ENCODE measurements at regions of chr1 and their contacts with region 1.

Region 1: GRCh38 chr1:92858564-92859399 is 26.9 kb downstream of the RPL5 start:
- DNase-seq: peak; percentile 9 to 88 (median 47)
- ATAC-seq: peak; percentile 97
- H3K4me3 ChIP-seq: peak overlapping the region in 1 of 2 experiments; percentile 4
- H3K4me3 Mint-ChIP-seq: peak overlapping the region; percentile 68
- H3K27ac ChIP-seq: no peak overlapping the region
- H3K27ac Mint-ChIP-seq: peak overlapping the region; percentile 73
- H3K4me1 ChIP-seq: peaks cover 8% of the 10 kb centered on the region
- H3K4me1 Mint-ChIP-seq: peaks cover 17% of the 10 kb centered on the region
- H3K27me3 ChIP-seq: no peaks in the 10 kb centered on the region
- H3K27me3 Mint-ChIP-seq: no peaks in the 10 kb centered on the region
- CTCF ChIP-seq: peak; percentile 98

Region 2: GRCh38 chr1:92709738-92710137 is 149.0 kb before region 1 on chr1:
- CTCF ChIA-PET with region 1: no interaction called
- POLR2A ChIA-PET with region 1: no interaction called
- intact Hi-C with region 1: no loop called
- DNase-seq: no peak
- ATAC-seq: no peak
- H3K4me3 ChIP-seq: no peak overlapping the region
- H3K4me3 Mint-ChIP-seq: no peak overlapping the region
- H3K27ac ChIP-seq: no peak overlapping the region
- H3K27ac Mint-ChIP-seq: no peak overlapping the region
- H3K4me1 ChIP-seq: no peaks in the 10 kb centered on the region
- H3K4me1 Mint-ChIP-seq: no peaks in the 10 kb centered on the region
- H3K27me3 ChIP-seq: no peaks in the 10 kb centered on the region
- H3K27me3 Mint-ChIP-seq: peaks cover 2% of the 10 kb centered on the region
- CTCF ChIP-seq: no peak

Region 3: GRCh38 chr1:92882819-92883218 is 24.0 kb after region 1 on chr1:
- CTCF ChIA-PET with region 1: interaction called, 34 read pairs
- POLR2A ChIA-PET with region 1: interaction called, 4 read pairs
- intact Hi-C with region 1: no loop called
- DNase-seq: peak in 8 of 9 experiments; percentile 30 to 81 (median 56)
- ATAC-seq: peak; percentile 94
- H3K4me3 ChIP-seq: no peak overlapping the region
- H3K4me3 Mint-ChIP-seq: peak overlapping the region; percentile 42
- H3K27ac ChIP-seq: peak overlapping the region; percentile 3 to 80
- H3K27ac Mint-ChIP-seq: peak overlapping the region; percentile 96
- H3K4me1 ChIP-seq: peaks cover 19% of the 10 kb centered on the region
- H3K4me1 Mint-ChIP-seq: peaks cover 43% of the 10 kb centered on the region
- H3K27me3 ChIP-seq: no peaks in the 10 kb centered on the region
- H3K27me3 Mint-ChIP-seq: no peaks in the 10 kb centered on the region
- CTCF ChIP-seq: no peak

Region 4: GRCh38 chr1:92951141-92951582 is 92.4 kb after region 1 on chr1:
- CTCF ChIA-PET with region 1: interaction called, 193 read pairs
- POLR2A ChIA-PET with region 1: interaction called, 3 read pairs
- intact Hi-C with region 1: no loop called
- DNase-seq: peak in 2 of 9 experiments; percentile 39 to 62
- ATAC-seq: peak; percentile 77
- H3K4me3 ChIP-seq: no peak overlapping the region
- H3K4me3 Mint-ChIP-seq: no peak overlapping the region
- H3K27ac ChIP-seq: peak overlapping the region in 1 of 2 experiments; percentile 4
- H3K27ac Mint-ChIP-seq: no peak overlapping the region
- H3K4me1 ChIP-seq: peaks cover 38% of the 10 kb centered on the region
- H3K4me1 Mint-ChIP-seq: peaks cover 39% of the 10 kb centered on the region
- H3K27me3 ChIP-seq: no peaks in the 10 kb centered on the region
- H3K27me3 Mint-ChIP-seq: no peaks in the 10 kb centered on the region
- CTCF ChIP-seq: no peak

Region 5: DNA sequence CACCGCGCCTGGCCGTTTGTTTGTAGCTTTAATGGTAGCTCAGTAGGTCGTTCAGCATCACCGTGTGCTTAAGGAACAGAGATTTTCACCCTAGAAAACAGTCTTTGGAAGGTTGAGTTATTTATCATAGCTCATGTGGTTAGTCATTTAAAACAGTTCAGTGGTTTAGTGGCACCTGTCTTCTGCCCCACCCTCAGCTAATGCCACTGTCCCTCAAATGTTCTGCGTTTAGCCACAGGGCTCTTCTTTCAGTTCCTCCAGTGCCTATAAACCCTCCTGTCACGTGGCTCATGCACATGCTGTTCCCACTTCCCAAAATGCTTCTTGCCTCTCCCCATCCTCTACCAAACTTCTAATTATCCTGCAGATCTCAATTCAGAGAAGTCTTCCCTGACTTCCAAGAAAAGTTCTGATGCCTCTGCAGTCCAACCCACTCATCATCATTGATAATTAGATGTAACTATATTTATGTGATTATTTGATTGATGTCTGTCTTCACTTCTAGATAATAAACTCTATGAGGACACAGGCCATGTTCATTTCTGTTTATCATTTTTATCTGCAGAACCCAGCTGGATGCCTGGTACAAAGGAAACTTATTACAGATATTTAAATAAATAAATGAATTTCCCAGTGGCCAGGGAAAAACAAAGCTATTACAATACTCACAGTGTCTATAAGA is 116.9 kb after region 1 on chr1:
- CTCF ChIA-PET with region 1: interaction called, 61 read pairs
- POLR2A ChIA-PET with region 1: no interaction called
- intact Hi-C with region 1: no loop called
- DNase-seq: no peak
- ATAC-seq: no peak
- H3K4me3 ChIP-seq: no peak overlapping the region
- H3K4me3 Mint-ChIP-seq: no peak overlapping the region
- H3K27ac ChIP-seq: no peak overlapping the region
- H3K27ac Mint-ChIP-seq: peak overlapping the region; percentile 52
- H3K4me1 ChIP-seq: peaks cover 13% of the 10 kb centered on the region
- H3K4me1 Mint-ChIP-seq: peaks cover 31% of the 10 kb centered on the region
- H3K27me3 ChIP-seq: no peaks in the 10 kb centered on the region
- H3K27me3 Mint-ChIP-seq: no peaks in the 10 kb centered on the region
- CTCF ChIP-seq: no peak

Region 6: DNA sequence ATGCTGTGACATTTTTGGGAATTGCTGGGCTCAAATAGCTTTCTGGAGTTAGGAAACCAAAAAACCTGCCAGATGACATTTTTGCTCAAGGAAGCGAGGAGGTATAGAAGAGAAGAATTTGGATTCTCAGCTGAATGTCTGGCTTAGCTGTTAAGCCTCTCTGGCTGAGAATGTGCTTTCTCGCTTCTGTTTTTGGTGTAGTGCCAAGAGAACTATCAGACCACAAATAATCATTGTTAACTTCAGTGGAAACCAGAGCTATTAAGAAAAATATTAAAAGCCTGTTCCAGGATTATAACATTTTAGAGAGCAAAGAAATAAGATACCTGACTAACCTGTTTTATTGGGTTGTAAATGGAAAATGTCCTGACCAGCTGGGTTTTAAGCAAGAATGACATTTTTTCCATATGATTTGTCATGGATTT is 142.0 kb after region 1 on chr1:
- CTCF ChIA-PET with region 1: interaction called, 20 read pairs
- POLR2A ChIA-PET with region 1: no interaction called
- intact Hi-C with region 1: no loop called
- DNase-seq: no peak
- ATAC-seq: no peak
- H3K4me3 ChIP-seq: no peak overlapping the region
- H3K4me3 Mint-ChIP-seq: no peak overlapping the region
- H3K27ac ChIP-seq: no peak overlapping the region
- H3K27ac Mint-ChIP-seq: no peak overlapping the region
- H3K4me1 ChIP-seq: no peaks in the 10 kb centered on the region
- H3K4me1 Mint-ChIP-seq: peaks cover 4% of the 10 kb centered on the region
- H3K27me3 ChIP-seq: no peaks in the 10 kb centered on the region
- H3K27me3 Mint-ChIP-seq: peaks cover 4% of the 10 kb centered on the region
- CTCF ChIP-seq: no peak

Region 7: GRCh38 chr1:93471911-93472310 is 613.1 kb after region 1 on chr1:
- CTCF ChIA-PET with region 1: no interaction called
- POLR2A ChIA-PET with region 1: no interaction called
- intact Hi-C with region 1: no loop called
- DNase-seq: no peak
- ATAC-seq: no peak
- H3K4me3 ChIP-seq: no peak overlapping the region
- H3K4me3 Mint-ChIP-seq: no peak overlapping the region
- H3K27ac ChIP-seq: no peak overlapping the region
- H3K27ac Mint-ChIP-seq: no peak overlapping the region
- H3K4me1 ChIP-seq: no peaks in the 10 kb centered on the region
- H3K4me1 Mint-ChIP-seq: no peaks in the 10 kb centered on the region
- H3K27me3 ChIP-seq: peaks cover 0 to 4% of the 10 kb centered on the region in 2 experiments
- H3K27me3 Mint-ChIP-seq: peaks cover 7% of the 10 kb centered on the region
- CTCF ChIP-seq: no peak

Measured in CD8-positive, alpha-beta T cell (primary cell).